ENCODE measurements at regions of chr1 and their contacts with region 1.

Region 1: DNA sequence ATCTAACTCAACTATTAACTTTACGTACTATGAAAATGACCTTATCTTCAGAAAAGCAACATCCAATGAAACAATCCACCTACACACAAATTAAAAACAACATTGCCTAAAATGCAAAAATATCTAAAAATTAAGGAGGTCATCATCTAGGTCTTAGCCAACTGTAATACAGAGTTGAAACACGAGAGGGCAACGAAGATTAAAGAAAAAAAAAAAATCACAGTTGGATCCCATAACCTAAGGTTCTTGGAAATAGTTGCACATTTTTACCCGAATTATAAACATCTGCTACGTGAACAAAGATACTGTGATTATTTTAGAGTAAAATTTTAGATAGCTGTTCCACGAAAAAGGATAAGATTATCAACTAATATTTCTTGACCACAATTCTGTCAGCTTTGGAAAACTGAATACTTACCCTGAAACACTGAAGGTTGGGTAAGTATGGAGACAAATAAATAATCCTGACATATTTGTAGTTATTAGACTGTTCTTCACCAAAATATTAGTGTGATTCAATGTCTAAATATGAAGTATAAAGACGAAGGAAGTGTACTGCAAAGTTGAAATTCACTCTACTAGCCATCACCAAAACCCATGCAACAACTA is 88.0 kb upstream of the AK4 start:
- DNase-seq: peak in 2 of 5 donors; percentile 43 to 52
- H3K4me3 ChIP-seq: no peak overlapping the region
- H3K27ac ChIP-seq: no peak overlapping the region
- H3K4me1 ChIP-seq: peaks cover 0 to 16% (median 7%) of the 10 kb centered on the region in 3 donors
- H3K27me3 ChIP-seq: no peaks in the 10 kb centered on the region
- CTCF ChIP-seq: peak; percentile 55

Region 2: GRCh38 chr1:64866689-64867088 is 193.3 kb before region 1 on chr1:
- intact Hi-C with region 1: no loop called
- DNase-seq: no peak
- H3K4me3 ChIP-seq: no peak overlapping the region
- H3K27ac ChIP-seq: no peak overlapping the region
- H3K4me1 ChIP-seq: peaks cover 0 to 5% (median 3%) of the 10 kb centered on the region in 3 donors
- H3K27me3 ChIP-seq: no peaks in the 10 kb centered on the region
- CTCF ChIP-seq: no peak

Region 3: DNA sequence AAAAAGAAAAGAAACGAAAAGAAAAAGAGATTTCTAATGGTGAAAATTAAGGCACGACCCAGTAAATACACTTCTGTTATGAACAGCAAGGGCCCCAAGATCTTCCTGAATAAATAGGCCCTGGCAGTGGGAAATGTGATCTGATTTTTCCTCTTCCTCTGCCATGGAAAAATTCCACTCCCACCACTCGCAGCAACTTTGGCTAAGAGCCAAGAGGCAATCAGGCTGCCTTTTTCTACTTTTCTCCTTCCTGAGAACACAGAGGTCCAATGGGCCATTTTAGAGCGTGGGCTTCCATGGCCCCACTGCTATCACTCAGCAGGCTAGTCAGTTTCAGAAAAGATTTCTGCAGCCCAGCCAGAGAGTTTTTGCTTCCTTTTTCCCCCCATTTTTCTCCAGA is 54.3 kb after region 1 on chr1:
- intact Hi-C with region 1: no loop called
- DNase-seq: peak in 4 of 5 donors; percentile 53 to 77 (median 65)
- H3K4me3 ChIP-seq: no peak overlapping the region
- H3K27ac ChIP-seq: no peak overlapping the region
- H3K4me1 ChIP-seq: no peaks in the 10 kb centered on the region
- H3K27me3 ChIP-seq: no peaks in the 10 kb centered on the region
- CTCF ChIP-seq: no peak

Region 4: GRCh38 chr1:65209005-65209885 is 149.2 kb after region 1 on chr1:
- intact Hi-C with region 1: loop called (anchors 10 kb)
- DNase-seq: peak in 3 of 5 donors; percentile 34 to 72 (median 68)
- H3K4me3 ChIP-seq: no peak overlapping the region
- H3K27ac ChIP-seq: peak overlapping the region in 1 of 2 donors; percentile 45
- H3K4me1 ChIP-seq: peaks cover 0 to 10% (median 6%) of the 10 kb centered on the region in 3 donors
- H3K27me3 ChIP-seq: no peaks in the 10 kb centered on the region
- CTCF ChIP-seq: peak; percentile 50